ENCODE measurements at regions of chr2 and their contacts with region 1.

Region 1: DNA sequence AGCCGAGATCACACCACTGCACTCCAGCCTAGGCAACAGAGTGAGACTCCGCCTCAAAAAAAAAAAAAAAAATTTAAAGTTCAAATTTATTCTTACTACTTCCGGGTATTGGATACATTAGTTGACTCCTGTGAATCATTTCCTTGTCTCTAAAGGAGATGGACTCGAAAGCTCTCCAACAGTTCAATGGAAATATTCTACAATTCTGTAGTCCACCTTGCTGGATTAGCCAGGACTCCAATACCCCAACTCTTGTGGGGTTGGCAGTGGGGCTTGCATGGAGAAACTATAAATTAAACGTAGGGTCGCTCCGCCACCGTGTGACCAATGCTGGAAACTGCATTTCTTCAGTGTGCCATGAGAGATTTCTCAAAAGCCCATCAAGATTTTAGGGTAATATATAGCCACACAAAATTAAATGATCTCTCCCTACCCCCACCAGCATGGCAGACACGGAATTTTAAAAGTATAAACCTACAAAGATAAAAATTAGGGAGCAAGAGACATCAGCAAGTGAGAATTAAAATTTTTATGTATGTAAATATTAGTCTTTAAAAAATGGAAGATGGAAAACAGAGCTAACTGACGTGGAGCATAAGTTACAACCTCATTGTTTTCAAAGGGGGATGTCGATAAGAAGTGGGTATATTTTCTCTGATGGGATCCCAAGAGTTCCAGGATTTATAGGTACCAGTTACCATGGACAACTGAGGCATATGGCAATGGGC is 27.8 kb upstream of the GAREM2 start:
- DNase-seq: peak; percentile 41 to 70
- ATAC-seq: peak; percentile 77

Region 2: GRCh38 chr2:25951071-25951547 is 194.0 kb before region 1 on chr2:
- intact Hi-C with region 1: loop called in 1 of 2 experiments (anchors 2 kb)
- DNase-seq: peak; percentile 78 to 85
- ATAC-seq: peak; percentile 98

Region 3: GRCh38 chr2:25991965-25992364 is 153.2 kb before region 1 on chr2:
- intact Hi-C with region 1: loop called in 1 of 2 experiments (anchors 10 kb)
- DNase-seq: no peak
- ATAC-seq: peak; percentile 56

Measured in left colon (tissue), 2 donors.